Stomach (tissue), 19 donors: ENCODE measurements at regions of chr17 and their contacts with region 1.

Region 1: DNA sequence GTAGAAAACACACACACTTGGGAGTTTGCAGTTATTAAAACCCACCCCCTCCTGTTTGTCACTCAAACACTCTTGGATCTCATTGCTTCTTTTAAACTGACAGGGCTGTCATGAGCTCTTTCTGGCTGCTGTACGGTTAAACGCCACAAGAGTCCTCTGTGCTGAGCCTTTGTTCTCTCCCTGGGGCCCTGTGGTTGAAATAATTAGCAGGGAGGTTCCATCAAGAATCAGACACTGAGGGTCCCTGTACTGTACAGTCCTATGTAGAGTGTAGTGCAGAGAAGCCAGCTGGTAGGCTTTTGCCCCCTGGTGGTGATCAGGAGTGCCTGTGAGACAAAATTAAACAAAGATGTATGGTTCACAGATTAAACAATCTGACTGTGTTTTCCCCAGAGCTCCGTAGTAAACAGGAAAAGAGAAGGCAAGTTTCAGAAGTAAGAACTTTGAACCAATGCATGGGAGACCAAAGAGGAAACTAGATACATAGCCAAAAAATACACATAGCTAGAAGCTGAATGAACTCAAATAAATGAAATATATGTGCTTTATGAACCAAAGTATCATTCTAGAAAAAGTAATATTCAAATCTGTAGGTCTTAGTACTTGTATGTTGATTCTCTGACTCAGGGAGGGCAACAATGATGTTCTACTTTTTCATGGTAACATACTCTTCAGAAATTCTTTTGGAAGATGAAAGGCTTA is 1.4 kb upstream of the SSH2 start:
- DNase-seq: peak; percentile 69 to 93
- H3K4me3 ChIP-seq: peak overlapping the region; percentile 75 to 97 (median 94)
- H3K27ac ChIP-seq: peak overlapping the region; percentile 16 to 97 (median 96)
- H3K4me1 ChIP-seq: peaks cover 18 to 40% (median 30%) of the 10 kb centered on the region in 4 donors
- H3K27me3 ChIP-seq: no peaks in the 10 kb centered on the region
- CTCF ChIP-seq: peak in 6 of 7 experiments; percentile 41 to 90 (median 82)
- EP300 ChIP-seq: no peak
- POLR2A ChIP-seq: no peak

Region 2: GRCh38 chr17:29807520-29808351 is 123.6 kb before region 1 on chr17:
- intact Hi-C with region 1: loop called (anchors 5 kb)
- DNase-seq: peak; percentile 65 to 88
- H3K4me3 ChIP-seq: no peak overlapping the region
- H3K27ac ChIP-seq: no peak overlapping the region
- H3K4me1 ChIP-seq: peaks cover 3 to 18% (median 6%) of the 10 kb centered on the region in 4 donors
- H3K27me3 ChIP-seq: no peaks in the 10 kb centered on the region
- CTCF ChIP-seq: peak in 5 of 7 experiments; percentile 45 to 75 (median 62)
- EP300 ChIP-seq: no peak
- POLR2A ChIP-seq: no peak